HEK293 (cell line): ENCODE measurements at regions of chr9 and their contacts with region 1.

Region 1: DNA sequence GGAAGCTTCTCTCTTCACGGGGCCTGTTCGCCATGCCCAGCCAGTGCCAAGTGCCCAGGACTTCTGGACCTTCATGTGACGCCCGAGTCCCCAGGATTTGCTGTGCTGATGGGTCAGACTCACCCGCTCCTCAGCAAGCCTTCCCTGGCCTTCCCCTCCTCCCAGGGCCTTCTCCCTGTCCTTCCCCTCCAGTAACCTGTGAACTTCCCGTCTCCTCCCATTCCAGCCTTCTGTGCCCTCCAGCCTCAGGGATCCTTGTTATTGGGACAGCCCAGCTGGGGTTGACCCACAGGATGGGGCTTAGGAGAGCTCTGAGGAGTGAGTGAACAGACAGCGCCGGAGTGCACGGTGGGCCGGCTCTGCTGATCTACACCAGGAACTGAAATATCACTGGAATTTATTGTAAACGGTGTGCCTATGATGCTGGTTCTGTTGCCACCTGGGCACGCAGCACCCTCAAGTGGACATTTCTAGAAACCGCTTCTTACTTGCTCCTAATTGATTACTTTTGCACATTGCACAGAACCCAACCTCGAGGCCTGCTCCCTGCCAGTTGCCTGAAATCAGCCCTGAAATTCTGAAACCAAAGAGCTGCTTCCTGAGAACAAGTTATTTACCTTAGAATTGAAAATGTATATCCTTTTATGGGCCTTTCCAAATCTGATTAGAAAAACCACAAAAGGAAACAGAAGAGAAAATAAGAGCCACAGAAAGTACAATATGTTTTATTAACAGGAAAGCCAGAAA is 1.5 kb downstream of the SPAAR start:
- H3K4me3 ChIP-seq: no peak overlapping the region
- H3K27ac ChIP-seq: no peak overlapping the region
- H3K4me1 ChIP-seq: peaks cover 10% of the 10 kb centered on the region
- CTCF ChIP-seq: peak; percentile 49; the same call in 1 of the 2 replicates

Region 2: GRCh38 chr9:35579130-35579529 is 331.7 kb before region 1 on chr9:
- CTCF ChIA-PET with region 1: no interaction called
- POLR2A ChIA-PET with region 1: no interaction called
- H3K4me3 ChIP-seq: no peak overlapping the region
- H3K27ac ChIP-seq: no peak overlapping the region
- H3K4me1 ChIP-seq: no peaks in the 10 kb centered on the region
- CTCF ChIP-seq: no peak

Region 3: DNA sequence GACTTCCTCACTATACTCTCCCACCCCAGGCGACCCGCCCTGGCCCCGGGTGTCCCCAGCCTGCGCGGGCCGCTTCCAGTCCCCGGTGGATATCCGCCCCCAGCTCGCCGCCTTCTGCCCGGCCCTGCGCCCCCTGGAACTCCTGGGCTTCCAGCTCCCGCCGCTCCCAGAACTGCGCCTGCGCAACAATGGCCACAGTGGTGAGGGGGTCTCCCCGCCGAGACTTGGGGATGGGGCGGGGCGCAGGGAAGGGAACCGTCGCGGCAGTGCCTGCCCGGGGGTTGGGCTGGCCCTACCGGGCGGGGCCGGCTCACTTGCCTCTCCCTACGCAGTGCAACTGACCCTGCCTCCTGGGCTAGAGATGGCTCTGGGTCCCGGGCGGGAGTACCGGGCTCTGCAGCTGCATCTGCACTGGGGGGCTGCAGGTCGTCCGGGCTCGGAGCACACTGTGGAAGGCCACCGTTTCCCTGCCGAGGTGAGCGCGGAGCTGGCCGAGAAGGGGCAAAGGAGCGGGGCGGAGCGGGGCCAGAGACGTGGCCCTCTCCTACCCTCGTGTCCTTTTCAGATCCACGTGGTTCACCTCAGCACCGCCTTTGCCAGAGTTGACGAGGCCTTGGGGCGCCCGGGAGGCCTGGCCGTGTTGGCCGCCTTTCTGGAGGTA is 234.9 kb before region 1 on chr9:
- CTCF ChIA-PET with region 1: no interaction called
- POLR2A ChIA-PET with region 1: no interaction called
- H3K4me3 ChIP-seq: no peak overlapping the region
- H3K27ac ChIP-seq: no peak overlapping the region
- H3K4me1 ChIP-seq: no peaks in the 10 kb centered on the region
- CTCF ChIP-seq: no peak

Region 4: GRCh38 chr9:35923927-35924763 is 13.4 kb after region 1 on chr9:
- CTCF ChIA-PET with region 1: interaction called, 45 read pairs
- POLR2A ChIA-PET with region 1: interaction called, 4 read pairs
- H3K4me3 ChIP-seq: no peak overlapping the region
- H3K27ac ChIP-seq: no peak overlapping the region
- H3K4me1 ChIP-seq: no peaks in the 10 kb centered on the region
- CTCF ChIP-seq: no peak

Region 5: DNA sequence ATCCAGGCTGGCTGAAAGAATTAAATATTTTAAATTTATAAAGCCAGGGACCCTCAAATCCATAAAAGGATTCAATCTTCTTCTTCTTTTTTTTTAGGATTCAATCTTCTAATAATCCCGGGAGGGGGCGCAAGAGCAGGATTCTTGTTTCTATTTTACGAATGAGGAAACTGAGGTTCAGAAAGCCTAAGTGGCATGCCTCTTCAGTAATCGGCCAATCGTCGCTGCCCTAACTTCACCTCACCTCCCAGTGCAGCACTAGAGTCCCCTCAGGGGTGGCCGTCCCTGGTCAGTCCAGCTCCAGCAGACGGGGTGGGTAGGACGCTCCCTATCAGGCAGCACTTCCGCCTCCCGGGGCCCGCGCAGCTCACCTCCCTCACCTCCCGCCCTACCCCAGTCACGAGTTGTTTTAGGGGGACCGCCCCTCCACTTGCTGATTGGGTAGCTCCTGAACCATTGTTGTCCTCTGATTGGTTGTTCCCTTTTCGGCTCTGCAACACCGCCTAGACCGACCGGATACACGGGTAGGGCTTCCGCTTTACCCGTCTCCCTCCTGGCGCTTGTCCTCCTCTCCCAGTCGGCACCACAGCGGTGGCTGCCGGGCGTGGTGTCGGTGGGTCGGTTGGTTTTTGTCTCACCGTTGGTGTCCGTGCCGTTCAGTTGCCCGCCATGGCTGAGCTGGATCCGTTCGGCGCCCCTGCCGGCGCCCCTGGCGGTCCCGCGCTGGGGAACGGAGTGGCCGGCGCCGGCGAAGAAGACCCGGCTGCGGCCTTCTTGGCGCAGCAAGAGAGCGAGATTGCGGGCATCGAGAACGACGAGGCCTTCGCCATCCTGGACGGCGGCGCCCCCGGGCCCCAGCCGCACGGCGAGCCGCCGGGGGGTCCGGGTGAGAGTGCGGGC is 279.9 kb after region 1 on chr9 and contains the start of gene CLTA:
- CTCF ChIA-PET with region 1: no interaction called
- POLR2A ChIA-PET with region 1: no interaction called
- H3K4me3 ChIP-seq: peak within 1 kb of the TSS; percentile 93
- H3K27ac ChIP-seq: peak within 1 kb of the TSS; percentile 84; the same call in 1 of the 2 replicates
- H3K4me1 ChIP-seq: 0 out of 2 replicates have a peak, but pooled peaks cover 6% of the 10 kb centered on the region
- CTCF ChIP-seq: peak; percentile 34; the same call in 1 of the 2 replicates